Mammary epithelial cell (primary cell): ENCODE measurements at regions of chr4 and their contacts with region 1.

Region 1: DNA sequence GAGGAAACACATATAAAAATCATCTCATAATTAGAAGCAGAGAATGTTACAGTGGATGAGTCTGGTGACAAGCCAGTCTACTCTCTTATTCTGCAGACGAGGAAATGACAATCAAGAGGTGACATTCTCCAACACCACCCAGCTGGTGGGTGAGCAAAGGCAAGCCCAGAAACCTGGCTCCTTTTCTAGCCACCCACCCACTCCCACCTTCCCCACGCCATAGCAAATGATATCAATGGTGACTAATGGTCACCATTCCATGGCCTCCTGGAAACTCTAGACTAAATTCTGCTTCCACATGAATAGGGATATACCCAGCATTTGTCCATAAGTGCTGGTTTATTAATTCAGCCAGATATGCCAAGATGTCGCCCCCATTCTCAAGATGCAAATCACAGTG is 10.7 kb downstream of the SEL1L3 start:
- DNase-seq: no peak
- H3K4me3 ChIP-seq: no peak overlapping the region
- H3K27ac ChIP-seq: no peak overlapping the region
- H3K4me1 ChIP-seq: peaks cover 5% of the 10 kb centered on the region
- H3K27me3 ChIP-seq: no peaks in the 10 kb centered on the region
- CTCF ChIP-seq: no peak

Region 2: GRCh38 chr4:25814301-25815136 is 37.6 kb before region 1 on chr4:
- CTCF ChIA-PET with region 1: no interaction called
- dilution Hi-C with region 1: loop called (anchors 10 kb)
- in situ Hi-C with region 1: no loop called
- intact Hi-C with region 1: loop called (anchors 5 kb)
- DNase-seq: peak; percentile 49
- H3K4me3 ChIP-seq: no peak overlapping the region
- H3K27ac ChIP-seq: peak overlapping the region; percentile 23
- H3K4me1 ChIP-seq: peaks cover 18% of the 10 kb centered on the region
- H3K27me3 ChIP-seq: no peaks in the 10 kb centered on the region
- CTCF ChIP-seq: no peak

Region 3: DNA sequence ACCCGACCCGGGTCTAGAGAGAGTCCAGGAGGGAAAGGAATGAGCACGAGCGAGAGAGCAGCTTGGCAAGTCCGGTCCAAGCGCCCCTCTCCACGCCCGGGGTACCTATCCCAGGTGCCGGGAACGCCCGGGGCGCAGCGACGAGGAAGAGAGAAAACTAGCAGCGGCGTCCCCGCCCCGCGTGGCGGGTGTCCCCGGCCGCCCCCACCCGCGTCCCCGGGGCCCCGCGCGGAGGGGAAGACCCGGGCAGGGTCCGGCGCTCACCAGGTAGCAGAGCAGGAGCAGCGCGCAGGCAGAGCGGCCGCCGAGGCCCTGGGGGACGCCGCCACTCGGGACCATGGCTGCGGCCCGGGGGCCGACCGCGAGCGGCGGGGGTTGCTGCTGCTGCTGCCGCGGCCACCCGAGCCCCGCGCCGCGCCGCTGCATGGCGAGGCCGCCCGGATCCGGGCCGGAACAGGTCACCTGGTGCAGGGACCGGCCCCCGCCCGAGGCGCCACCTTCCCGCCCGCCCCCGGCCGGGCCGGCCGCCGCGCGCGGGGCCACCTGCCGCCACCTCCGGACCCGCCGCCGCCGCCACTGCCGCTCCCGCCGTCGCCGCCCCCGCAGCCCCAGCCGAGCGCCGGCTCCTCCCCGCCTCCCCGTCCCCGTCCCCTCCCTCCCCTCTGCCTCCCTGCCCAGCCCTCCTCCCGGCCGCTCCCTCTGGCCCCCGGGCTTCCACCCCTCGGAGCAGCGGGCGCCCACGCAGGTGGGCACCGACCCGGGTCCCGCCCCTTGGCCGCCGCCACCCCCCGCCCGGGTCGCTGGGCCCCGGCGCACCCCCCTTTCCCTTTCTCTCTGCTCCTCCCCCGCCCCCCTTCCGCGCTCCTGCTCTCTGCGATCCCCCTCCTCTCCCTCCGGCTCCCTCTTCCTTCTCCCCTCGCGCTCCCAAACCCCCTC is 10.6 kb after region 1 on chr4 and contains the start of gene SEL1L3:
- CTCF ChIA-PET with region 1: no interaction called
- dilution Hi-C with region 1: no loop called
- in situ Hi-C with region 1: no loop called
- intact Hi-C with region 1: no loop called
- DNase-seq: no peak
- H3K4me3 ChIP-seq: peak within 1 kb of the TSS; percentile 50 to 70 (median 66)
- H3K27ac ChIP-seq: no peak within 1 kb of the TSS
- H3K4me1 ChIP-seq: peaks cover 11% of the 10 kb centered on the region
- H3K27me3 ChIP-seq: no peaks in the 10 kb centered on the region
- CTCF ChIP-seq: no peak
- total RNA-seq, gene SEL1L3: 25.0 to 101 TPM

Region 4: DNA sequence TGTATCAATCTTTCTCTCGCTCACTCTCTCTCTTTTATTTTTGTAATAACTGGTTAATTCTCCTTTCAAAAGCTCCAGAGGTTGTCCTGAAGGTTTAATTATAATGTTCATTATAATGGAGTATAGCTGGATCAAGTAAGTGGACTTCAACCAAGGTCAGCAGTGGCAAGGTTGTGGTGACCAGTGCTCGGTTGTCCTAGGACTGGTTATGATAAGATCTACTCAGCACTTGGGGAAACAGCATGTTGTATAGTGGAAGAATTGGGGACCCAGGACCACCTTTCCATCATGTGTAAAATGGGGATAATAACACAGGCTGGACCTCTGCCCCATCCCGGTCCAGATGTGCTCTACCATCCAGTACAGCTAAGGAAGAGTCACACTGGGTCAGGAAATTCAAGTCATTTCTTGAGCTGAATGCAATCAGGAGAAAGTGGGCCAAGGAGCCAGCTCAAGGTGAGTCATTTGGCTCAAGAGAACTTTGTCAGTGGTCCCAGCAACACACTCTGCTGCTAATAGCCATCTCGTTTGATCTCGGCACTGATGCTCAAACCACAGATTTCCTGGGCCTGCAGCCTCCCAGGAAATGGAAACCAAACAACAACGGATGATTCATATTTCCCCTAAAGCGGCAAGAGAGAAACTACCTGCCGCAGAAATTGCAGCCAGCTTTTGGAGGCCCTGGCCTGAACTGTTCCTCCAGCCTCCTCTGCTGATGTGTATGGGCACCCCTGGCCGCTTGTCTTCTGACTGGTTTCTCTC is 345.1 kb after region 1 on chr4:
- CTCF ChIA-PET with region 1: no interaction called
- dilution Hi-C with region 1: no loop called
- in situ Hi-C with region 1: no loop called
- intact Hi-C with region 1: no loop called
- DNase-seq: peak; percentile 96
- H3K4me3 ChIP-seq: no peak overlapping the region
- H3K27ac ChIP-seq: no peak overlapping the region
- H3K4me1 ChIP-seq: peaks cover 8% of the 10 kb centered on the region
- H3K27me3 ChIP-seq: peaks cover 21% of the 10 kb centered on the region
- CTCF ChIP-seq: no peak